HepG2 (cell line): ENCODE measurements at regions of chr1 and their contacts with region 1.

Region 1: DNA sequence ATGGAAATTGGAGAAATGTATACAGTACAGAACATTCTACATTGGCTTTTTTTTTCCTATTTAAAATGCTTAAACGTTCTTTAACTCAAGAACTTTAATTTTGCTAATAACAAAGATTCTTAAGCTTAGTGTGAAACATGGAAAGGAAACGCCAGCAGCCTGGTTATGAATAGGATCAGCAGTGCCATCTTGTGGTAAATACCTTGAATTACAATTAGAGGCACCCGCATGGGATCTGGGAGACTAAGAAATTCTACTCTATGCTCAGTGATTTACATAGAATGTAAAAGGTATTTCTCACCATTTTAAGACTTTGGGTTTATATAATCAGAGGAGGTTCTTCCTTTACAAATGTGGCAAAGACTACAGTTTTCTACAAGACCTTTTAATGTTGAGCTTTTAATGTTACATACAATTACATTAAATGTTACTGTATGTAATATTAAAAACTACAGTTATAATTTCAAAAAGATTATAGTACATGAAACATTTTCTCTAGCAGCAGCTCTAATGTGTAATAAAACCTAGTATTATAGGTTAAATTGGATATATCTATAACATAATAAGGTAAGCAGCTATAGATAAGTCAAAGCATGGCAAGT is 32.1 kb upstream of the APOBEC4 start:
- DNase-seq: peak; percentile 55
- ATAC-seq: peak; percentile 46; the same call in 2 of the 3 replicates
- H3K4me3 ChIP-seq: no peak overlapping the region
- H3K27ac ChIP-seq: no peak overlapping the region
- H3K4me1 ChIP-seq: no peaks in the 10 kb centered on the region
- H3K27me3 ChIP-seq: no peaks in the 10 kb centered on the region
- CTCF ChIP-seq: peak; percentile 73
- EP300 ChIP-seq: no peak
- POLR2A ChIP-seq: no peak
- RAD21 ChIP-seq: peak; percentile 63; the same call in 1 of the 2 replicates

Region 2: DNA sequence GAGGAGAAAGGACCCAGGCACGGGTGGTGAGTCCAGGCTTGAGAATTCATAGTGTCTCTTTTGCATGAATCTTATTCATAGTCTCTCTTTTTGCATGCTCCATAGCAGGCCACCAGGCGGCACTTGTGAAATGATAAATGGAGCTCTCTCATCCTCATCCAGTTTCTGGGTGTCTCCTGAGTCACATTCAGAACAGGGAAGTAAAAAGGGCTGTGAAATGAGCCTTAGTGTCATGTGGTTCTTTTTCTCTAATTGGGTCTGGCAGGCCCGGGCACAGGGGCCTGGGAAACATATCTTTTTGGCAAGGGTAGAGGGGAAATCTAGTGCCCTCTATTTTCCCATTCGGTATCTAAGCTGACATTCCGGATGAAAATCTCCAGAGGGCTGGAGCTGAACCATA is 75.9 kb before region 1 on chr1:
- CTCF ChIA-PET with region 1: no interaction called
- POLR2A ChIA-PET with region 1: no interaction called
- in situ Hi-C with region 1: no loop called
- intact Hi-C with region 1: loop called (anchors 1 kb)
- DNase-seq: peak; percentile 43
- ATAC-seq: peak; percentile 89
- H3K4me3 ChIP-seq: no peak overlapping the region
- H3K27ac ChIP-seq: no peak overlapping the region
- H3K4me1 ChIP-seq: peaks cover 10% of the 10 kb centered on the region; the same call in 1 of the 2 replicates
- H3K27me3 ChIP-seq: no peaks in the 10 kb centered on the region
- CTCF ChIP-seq: peak; percentile 61
- EP300 ChIP-seq: no peak
- POLR2A ChIP-seq: no peak
- RAD21 ChIP-seq: no peak

Region 3: GRCh38 chr1:183635606-183636333 is 49.4 kb before region 1 on chr1 and contains the start of gene ARPC5:
- CTCF ChIA-PET with region 1: no interaction called
- POLR2A ChIA-PET with region 1: no interaction called
- in situ Hi-C with region 1: loop called (anchors 10 kb)
- intact Hi-C with region 1: loop called (anchors 10 kb)
- DNase-seq: peak; percentile 90
- ATAC-seq: peak; percentile 90
- H3K4me3 ChIP-seq: peak within 1 kb of the TSS; percentile 89 to 97 (median 91)
- H3K27ac ChIP-seq: peak within 1 kb of the TSS; percentile 84
- H3K4me1 ChIP-seq: peaks cover 73% of the 10 kb centered on the region
- H3K27me3 ChIP-seq: no peaks in the 10 kb centered on the region
- CTCF ChIP-seq: no peak
- EP300 ChIP-seq: no peak; a peak in 1 of 4 replicates
- POLR2A ChIP-seq: peak; percentile 83 to 84
- RAD21 ChIP-seq: no peak
- total RNA-seq, gene ARPC5: 106 and 148 TPM in 2 replicates

Region 4: DNA sequence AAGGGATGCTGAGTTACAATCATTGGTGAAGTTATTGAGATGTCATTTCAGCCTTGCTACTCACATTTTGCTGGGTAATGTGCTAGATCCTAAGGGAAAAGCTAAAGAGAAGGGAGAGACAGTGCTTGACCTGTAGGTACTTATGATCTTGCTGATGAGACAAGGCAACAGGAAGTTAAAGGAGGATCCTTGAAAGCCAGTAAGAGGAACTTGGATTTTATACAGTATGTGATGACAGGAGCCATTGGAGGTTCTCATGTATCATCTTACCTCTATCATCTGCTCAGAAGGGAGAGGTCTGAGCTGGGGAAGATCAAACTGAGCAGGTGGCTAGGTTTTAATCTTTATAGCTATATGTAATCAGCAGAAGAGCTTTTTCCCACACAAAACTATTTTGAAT is 38.4 kb before region 1 on chr1:
- CTCF ChIA-PET with region 1: no interaction called
- POLR2A ChIA-PET with region 1: no interaction called
- in situ Hi-C with region 1: loop called (anchors 10 kb)
- intact Hi-C with region 1: no loop called
- DNase-seq: no peak
- ATAC-seq: no peak
- H3K4me3 ChIP-seq: no peak overlapping the region
- H3K27ac ChIP-seq: no peak overlapping the region
- H3K4me1 ChIP-seq: peaks cover 10% of the 10 kb centered on the region
- H3K27me3 ChIP-seq: no peaks in the 10 kb centered on the region
- CTCF ChIP-seq: no peak
- EP300 ChIP-seq: no peak
- POLR2A ChIP-seq: no peak
- RAD21 ChIP-seq: no peak

Region 5: GRCh38 chr1:183655562-183656075 is 29.6 kb before region 1 on chr1:
- CTCF ChIA-PET with region 1: interaction called, 35 read pairs
- POLR2A ChIA-PET with region 1: interaction called, 6 read pairs
- in situ Hi-C with region 1: no loop called
- intact Hi-C with region 1: loop called (anchors 1 kb)
- DNase-seq: peak; percentile 67
- ATAC-seq: peak; percentile 84
- H3K4me3 ChIP-seq: no peak overlapping the region
- H3K27ac ChIP-seq: no peak overlapping the region
- H3K4me1 ChIP-seq: peaks cover 14% of the 10 kb centered on the region
- H3K27me3 ChIP-seq: no peaks in the 10 kb centered on the region
- CTCF ChIP-seq: peak; percentile 87
- EP300 ChIP-seq: no peak
- POLR2A ChIP-seq: no peak
- RAD21 ChIP-seq: peak; percentile 87

Region 6: GRCh38 chr1:183726825-183727224 is 41.6 kb after region 1 on chr1:
- CTCF ChIA-PET with region 1: no interaction called
- POLR2A ChIA-PET with region 1: no interaction called
- in situ Hi-C with region 1: no loop called
- intact Hi-C with region 1: loop called (anchors 2 kb)
- DNase-seq: no peak
- ATAC-seq: no peak
- H3K4me3 ChIP-seq: no peak overlapping the region
- H3K27ac ChIP-seq: no peak overlapping the region
- H3K4me1 ChIP-seq: peaks cover 16% of the 10 kb centered on the region
- H3K27me3 ChIP-seq: no peaks in the 10 kb centered on the region
- CTCF ChIP-seq: no peak
- EP300 ChIP-seq: no peak
- POLR2A ChIP-seq: no peak
- RAD21 ChIP-seq: no peak

Region 7: DNA sequence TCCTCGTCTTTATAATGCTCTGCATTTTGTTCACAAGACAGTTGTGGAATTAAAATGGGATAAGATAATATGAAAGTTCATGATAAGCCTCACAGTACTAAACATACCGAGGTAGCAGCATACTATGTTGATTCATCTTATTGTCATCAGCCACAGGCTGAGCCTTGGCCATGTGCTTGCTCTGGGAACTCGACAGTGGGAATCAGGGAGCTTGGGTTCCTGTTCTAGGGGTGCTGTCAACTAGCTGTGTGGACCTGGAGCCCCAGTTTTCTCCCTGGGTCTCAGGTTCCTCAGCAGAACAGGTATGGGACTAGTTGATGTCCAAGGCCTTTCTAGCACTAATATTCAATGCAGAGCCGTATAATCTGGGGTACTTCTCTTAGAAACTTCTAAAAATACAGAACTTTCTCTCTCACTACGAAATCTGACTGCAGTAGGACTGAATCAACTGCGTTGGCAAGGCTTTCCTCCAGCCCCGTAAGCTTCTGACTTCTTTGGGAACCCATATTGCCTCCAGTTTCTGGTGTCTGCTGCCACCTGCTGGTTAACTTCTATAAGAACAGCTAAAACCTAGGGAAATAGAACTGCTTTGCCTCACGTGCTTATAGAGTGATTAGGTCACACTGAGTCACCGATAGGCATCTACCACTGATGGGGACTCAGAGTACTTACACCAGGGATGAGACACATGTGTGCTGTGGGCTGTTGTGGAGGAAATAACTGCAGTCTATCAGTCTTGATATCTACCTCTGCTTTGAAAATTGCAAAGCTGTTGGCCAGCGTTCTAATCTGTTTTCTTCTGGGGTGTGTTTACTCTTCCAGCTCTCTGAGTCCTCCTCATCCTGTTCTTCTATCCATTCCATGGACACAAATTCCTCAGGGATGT is 230.7 kb after region 1 on chr1:
- CTCF ChIA-PET with region 1: interaction called, 3 read pairs
- POLR2A ChIA-PET with region 1: no interaction called
- in situ Hi-C with region 1: no loop called
- intact Hi-C with region 1: loop called (anchors 1 kb)
- DNase-seq: peak; percentile 83
- ATAC-seq: peak; percentile 95
- H3K4me3 ChIP-seq: no peak overlapping the region
- H3K27ac ChIP-seq: no peak overlapping the region
- H3K4me1 ChIP-seq: peaks cover 4% of the 10 kb centered on the region; the same call in 1 of the 2 replicates
- H3K27me3 ChIP-seq: no peaks in the 10 kb centered on the region
- CTCF ChIP-seq: peak; percentile 91
- EP300 ChIP-seq: no peak
- POLR2A ChIP-seq: no peak
- RAD21 ChIP-seq: peak; percentile 86